GM18951 (cell line): ENCODE measurements at regions of chr1 and their contacts with region 1.

Region 1: DNA sequence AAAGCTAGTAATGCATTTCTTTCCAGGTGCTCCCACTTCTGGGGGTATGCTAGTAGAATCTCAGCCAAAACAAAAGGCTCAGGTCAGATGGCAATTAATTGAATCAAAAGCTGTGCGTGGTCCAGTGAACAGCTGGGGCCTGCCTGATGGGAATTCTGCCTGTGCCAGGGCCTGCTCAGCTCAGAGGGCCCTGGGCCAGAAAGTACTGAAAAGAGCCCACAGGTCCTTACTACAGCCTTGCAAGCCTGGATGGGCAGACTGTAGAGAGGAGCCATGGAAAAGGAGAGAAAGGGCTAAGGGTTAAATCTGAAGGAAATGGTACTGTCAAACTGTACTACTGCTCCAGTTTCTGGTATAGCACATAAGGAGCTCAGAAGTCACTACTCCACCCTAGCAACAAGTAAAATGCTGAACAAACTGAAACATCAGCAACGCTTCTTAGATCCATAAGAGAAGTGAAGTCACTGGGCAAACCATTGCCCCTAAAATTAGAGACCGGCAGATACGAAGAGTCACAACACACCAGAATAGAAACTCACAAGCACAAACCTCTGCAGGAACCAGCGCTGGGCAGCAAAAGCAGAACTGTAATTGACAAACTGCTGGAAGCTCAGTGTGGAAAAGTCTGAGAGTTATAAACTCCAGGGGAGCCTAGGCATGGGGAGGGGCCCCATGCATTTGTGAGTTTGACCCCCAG is 121.1 kb upstream of the SYT6 start:
- POLR2A ChIP-seq: no peak

Region 2: GRCh38 chr1:113982033-113982931 is 292.5 kb before region 1 on chr1:
- in situ Hi-C with region 1: loop called (anchors 5 kb)
- POLR2A ChIP-seq: no peak

Region 3: DNA sequence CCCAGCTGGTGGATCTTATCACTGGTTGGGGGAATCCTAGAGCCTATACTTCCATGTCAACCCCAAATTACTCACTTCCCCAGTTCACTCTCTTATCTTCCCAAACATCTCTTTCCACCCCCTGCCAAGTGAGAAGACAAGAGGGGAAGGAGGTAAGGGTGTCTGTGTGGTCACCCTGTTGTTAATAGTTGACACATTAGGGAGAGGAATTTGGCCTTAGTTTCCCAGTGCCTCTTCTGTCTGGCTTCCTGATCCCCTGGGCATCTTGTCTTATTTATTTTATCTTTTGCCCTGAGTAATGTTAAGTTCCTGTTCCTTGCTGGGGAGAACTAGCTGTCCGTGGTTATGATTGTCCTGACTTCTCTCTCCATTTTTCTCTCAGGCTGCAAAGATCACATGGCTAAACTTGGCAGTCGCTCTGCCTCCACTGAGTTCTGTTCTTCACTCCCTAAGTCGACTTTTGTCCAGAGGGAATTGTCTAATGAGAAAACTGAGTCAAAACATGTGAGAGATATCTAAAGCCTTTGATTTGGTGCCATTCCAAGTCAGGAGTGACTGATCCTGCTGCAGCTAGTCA is 36.0 kb after region 1 on chr1:
- in situ Hi-C with region 1: no loop called
- POLR2A ChIP-seq: no peak